HAP-1 (cell line): ENCODE measurements at regions of chr3 and their contacts with region 1.

Region 1: DNA sequence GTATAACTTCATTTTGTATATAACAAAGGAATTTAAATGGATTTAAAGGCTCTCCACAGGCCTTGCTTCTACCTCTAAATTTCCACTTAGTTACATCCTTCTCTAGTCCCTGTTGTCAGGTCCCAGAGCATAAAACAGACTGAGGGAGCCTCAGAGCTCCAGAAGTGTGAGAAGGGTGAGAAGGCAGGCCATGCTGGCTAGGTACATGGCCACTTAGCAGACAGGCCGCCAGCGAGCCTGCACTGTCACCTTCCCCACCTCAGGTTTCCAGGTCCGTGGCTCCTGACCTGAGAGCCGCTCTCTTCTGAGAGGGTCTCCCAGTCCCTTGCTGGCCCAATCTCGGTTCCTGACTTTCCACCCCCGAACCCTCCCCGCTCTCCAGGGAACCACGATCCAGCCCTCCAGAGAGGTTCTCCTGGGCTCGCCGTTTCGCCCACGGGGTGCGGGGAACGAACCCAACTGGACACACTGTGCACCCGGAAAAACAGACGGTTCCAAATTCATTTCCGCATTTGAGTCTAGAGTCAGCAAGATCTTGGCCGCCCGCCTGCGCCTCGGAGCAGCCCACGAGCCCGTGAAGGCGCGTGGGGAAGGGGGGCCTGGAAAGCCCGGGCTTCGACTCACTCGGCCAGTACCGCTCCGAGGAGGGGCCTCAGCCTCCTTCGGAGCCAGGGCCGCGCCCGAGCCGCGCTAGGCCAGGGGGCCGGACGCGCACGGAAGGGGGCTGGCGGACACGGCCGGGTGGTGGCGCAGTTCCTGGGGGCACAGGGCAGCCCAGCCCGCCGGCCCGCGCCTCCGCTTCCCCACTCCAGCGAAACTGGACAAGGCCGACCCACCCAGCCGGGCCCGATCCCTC is 16.7 kb upstream of the SOX2 start:
- DNase-seq: peak; percentile 6 to 78
- H3K4me3 ChIP-seq: peak overlapping the region; percentile 6; the same call in 1 of the 2 replicates
- H3K4me1 ChIP-seq: peaks cover 69% of the 10 kb centered on the region
- H3K27me3 ChIP-seq: no peaks in the 10 kb centered on the region

Region 2: DNA sequence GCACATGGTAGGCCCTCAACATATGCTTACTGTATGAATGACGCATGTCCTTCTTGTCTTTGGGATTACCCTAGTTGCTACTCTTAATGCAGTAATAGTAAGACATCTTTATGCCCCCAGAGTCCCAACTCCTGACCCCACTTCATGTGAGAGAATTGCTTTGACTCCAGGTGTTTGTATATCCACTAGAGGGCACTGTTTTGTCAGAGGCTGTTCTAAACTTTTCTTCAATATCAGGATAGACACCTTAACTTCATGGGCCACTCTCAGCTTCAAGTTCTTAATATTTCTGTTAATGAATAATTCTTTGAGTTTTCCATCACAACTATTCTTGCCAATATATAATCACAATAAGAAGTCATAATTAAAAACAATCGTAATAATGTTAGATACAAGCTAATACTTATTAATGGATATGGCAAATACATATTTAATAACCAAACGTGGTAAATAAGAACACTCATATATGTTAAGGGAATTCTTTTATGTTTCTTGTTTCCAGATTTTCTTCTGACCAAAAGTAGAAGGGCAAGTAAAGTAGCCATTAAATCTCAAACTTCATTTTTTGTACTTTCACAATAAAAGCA is 368.3 kb before region 1 on chr3:
- in situ Hi-C with region 1: loop called (anchors 10 kb)
- DNase-seq: peak; percentile 31 to 53
- H3K4me3 ChIP-seq: no peak overlapping the region
- H3K4me1 ChIP-seq: 0 out of 2 replicates have a peak, but pooled peaks cover 7% of the 10 kb centered on the region
- H3K27me3 ChIP-seq: peaks cover 19% of the 10 kb centered on the region

Region 3: GRCh38 chr3:181457190-181457589 is 237.8 kb before region 1 on chr3:
- in situ Hi-C with region 1: loop called (anchors 10 kb)
- DNase-seq: peak in 1 of 2 experiments; percentile 50
- H3K4me3 ChIP-seq: no peak overlapping the region
- H3K4me1 ChIP-seq: peaks cover 43% of the 10 kb centered on the region
- H3K27me3 ChIP-seq: no peaks in the 10 kb centered on the region

Region 4: DNA sequence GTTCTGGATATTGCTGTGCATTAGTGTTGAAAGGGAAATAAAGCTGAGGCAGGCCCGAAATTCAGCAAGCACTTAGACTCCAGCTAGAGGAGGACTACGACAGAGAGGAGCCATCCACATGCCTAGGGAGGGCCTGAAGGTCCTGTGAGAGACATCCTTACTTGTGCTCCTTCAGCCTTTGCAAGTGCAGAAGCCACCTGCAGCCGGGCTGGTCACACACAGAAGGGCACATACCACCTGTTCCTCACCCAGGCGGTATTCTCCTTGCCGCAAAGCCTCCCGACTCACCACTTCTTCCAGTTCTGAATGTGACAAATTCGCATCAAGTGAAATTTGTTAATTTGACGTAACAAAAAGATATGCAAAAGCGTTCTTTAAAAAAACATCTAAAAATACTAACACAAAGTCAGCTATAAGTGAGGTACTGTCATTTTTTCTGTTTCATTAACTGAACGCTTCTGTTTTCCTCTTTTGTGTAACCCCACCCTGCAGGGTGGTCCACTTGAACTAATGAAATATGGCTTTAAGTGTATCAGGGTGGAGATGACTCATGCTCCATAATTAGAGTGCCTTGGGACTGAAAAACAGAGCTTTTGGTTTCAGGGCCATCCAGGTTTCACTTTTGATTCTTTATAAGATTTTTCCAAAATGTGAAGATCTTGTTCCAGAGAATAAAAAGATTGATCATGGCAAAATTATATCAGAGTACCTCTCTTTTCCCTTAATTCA is 630.3 kb after region 1 on chr3:
- in situ Hi-C with region 1: no loop called
- DNase-seq: no peak
- H3K4me3 ChIP-seq: no peak overlapping the region
- H3K4me1 ChIP-seq: no peaks in the 10 kb centered on the region; the same call in 1 of the 2 replicates
- H3K27me3 ChIP-seq: peaks cover 17% of the 10 kb centered on the region